ENCODE measurements at regions of chr7 and their contacts with region 1.

Region 1: GRCh38 chr7:65307651-65308299 is 65.9 kb upstream of the ZNF92 start:
- DNase-seq: peak; percentile 45 to 70 (median 49)
- H3K4me3 ChIP-seq: no peak overlapping the region
- H3K27ac ChIP-seq: no peak overlapping the region
- H3K4me1 ChIP-seq: no peaks in the 10 kb centered on the region
- H3K27me3 ChIP-seq: no peaks in the 10 kb centered on the region
- CTCF ChIP-seq: peak; percentile 69 to 87 (median 79)
- POLR2A ChIP-seq: no peak

Region 2: GRCh38 chr7:64951250-64951848 is 356.4 kb before region 1 on chr7:
- intact Hi-C with region 1: loop called (anchors 5 kb)
- DNase-seq: peak in 1 of 7 donors; percentile 15
- H3K4me3 ChIP-seq: no peak overlapping the region
- H3K27ac ChIP-seq: no peak overlapping the region
- H3K4me1 ChIP-seq: peaks cover 7 to 13% of the 10 kb centered on the region in 2 donors
- H3K27me3 ChIP-seq: no peaks in the 10 kb centered on the region
- CTCF ChIP-seq: peak; percentile 74 to 91 (median 88)
- POLR2A ChIP-seq: no peak

Region 3: DNA sequence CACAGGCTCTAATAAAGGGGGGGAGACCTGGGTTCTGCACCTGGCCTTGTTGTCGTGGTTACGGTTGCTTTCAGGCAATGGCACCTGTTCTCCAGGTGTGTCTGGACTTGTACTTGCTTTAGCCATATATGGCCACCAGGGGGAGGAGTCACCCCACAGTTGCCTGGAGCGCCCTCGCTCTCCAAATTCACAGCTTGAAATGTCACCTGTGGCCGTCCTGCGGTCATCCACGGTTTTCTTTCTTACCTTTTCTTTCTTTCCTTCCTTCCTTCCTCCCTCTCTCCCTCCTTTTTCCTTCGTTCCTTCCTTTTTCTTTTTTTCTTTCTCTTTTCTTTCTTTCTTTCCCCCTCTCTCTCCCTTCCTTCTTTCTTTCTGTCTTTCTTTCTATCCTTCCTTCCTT is 91.3 kb before region 1 on chr7:
- intact Hi-C with region 1: loop called (anchors 5 kb)
- DNase-seq: peak; percentile 54 to 75 (median 62)
- H3K4me3 ChIP-seq: no peak overlapping the region
- H3K27ac ChIP-seq: no peak overlapping the region
- H3K4me1 ChIP-seq: peaks cover 0 to 3% of the 10 kb centered on the region in 2 donors
- H3K27me3 ChIP-seq: no peaks in the 10 kb centered on the region
- CTCF ChIP-seq: peak; percentile 63 to 70 (median 67)
- POLR2A ChIP-seq: no peak

Region 4: DNA sequence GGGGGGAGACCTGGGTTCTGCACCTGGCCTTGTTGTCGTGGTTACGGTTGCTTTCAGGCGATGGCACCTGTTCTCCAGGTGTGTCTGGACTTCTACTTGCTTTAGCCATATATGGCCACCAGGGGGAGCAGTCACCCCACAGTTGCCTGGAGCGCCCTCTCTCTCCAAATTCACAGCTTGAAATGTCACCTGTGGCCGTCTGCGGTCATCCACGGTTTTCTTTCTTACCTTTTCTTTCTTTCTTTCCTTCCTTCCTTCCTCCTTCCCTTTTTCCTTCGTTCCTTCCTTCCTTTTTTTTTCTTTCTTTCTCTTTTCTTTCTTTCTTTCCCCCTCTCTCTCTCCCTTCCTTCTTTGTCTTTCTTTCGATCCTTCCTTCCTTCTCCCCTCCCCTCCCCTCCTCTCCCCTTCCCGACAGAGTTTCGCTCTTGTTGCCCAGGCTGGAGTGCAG is 414.6 kb after region 1 on chr7:
- intact Hi-C with region 1: no loop called
- DNase-seq: peak; percentile 30 to 78 (median 59)
- H3K4me3 ChIP-seq: no peak overlapping the region
- H3K27ac ChIP-seq: no peak overlapping the region
- H3K4me1 ChIP-seq: no peaks in the 10 kb centered on the region
- H3K27me3 ChIP-seq: no peaks in the 10 kb centered on the region
- CTCF ChIP-seq: peak; percentile 47 to 90 (median 60)
- POLR2A ChIP-seq: no peak

Measured in adrenal gland (tissue), 19 donors.